IMR-90 (cell line): ENCODE measurements at regions of chr2 and their contacts with region 1.

Region 1: DNA sequence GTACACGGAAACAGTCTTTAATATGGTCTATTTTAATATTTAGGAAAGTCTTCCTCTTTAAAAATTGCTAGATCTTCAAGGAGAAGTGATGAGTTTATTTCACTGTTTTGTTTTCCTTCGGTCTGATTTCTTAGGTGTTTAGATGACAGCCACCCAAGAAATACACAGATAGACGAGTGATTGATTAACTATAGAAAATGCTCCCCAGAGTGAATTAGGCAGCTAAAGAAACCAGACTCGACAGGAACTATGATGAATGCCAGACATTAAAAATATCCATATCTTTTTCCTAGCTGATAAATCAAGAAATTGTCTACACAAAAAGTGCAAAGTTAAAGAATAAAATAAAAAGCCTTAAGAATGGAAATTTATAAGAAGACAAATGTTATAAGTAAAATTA is 888.7 kb upstream of the CNTNAP5 start:
- DNase-seq: no peak
- ATAC-seq: no peak
- H3K4me3 ChIP-seq: no peak overlapping the region
- H3K27ac ChIP-seq: no peak overlapping the region
- H3K4me1 ChIP-seq: no peaks in the 10 kb centered on the region
- H3K27me3 ChIP-seq: no peaks in the 10 kb centered on the region
- CTCF ChIP-seq: no peak
- POLR2A ChIP-seq: no peak
- RAD21 ChIP-seq: no peak

Region 2: GRCh38 chr2:122831649-122832048 is 304.8 kb before region 1 on chr2:
- CTCF ChIA-PET with region 1: no interaction called
- POLR2A ChIA-PET with region 1: no interaction called
- dilution Hi-C with region 1: no loop called
- in situ Hi-C with region 1: no loop called
- intact Hi-C with region 1: no loop called
- DNase-seq: no peak
- ATAC-seq: no peak
- H3K4me3 ChIP-seq: no peak overlapping the region
- H3K27ac ChIP-seq: no peak overlapping the region
- H3K4me1 ChIP-seq: no peaks in the 10 kb centered on the region
- H3K27me3 ChIP-seq: no peaks in the 10 kb centered on the region
- CTCF ChIP-seq: no peak
- POLR2A ChIP-seq: no peak
- RAD21 ChIP-seq: no peak

Region 3: GRCh38 chr2:122908159-122908558 is 228.3 kb before region 1 on chr2:
- CTCF ChIA-PET with region 1: no interaction called
- POLR2A ChIA-PET with region 1: no interaction called
- dilution Hi-C with region 1: no loop called
- in situ Hi-C with region 1: no loop called
- intact Hi-C with region 1: no loop called
- DNase-seq: no peak
- ATAC-seq: no peak
- H3K4me3 ChIP-seq: no peak overlapping the region
- H3K27ac ChIP-seq: no peak overlapping the region
- H3K4me1 ChIP-seq: no peaks in the 10 kb centered on the region
- H3K27me3 ChIP-seq: no peaks in the 10 kb centered on the region
- CTCF ChIP-seq: no peak
- POLR2A ChIP-seq: no peak
- RAD21 ChIP-seq: no peak

Region 4: GRCh38 chr2:123157016-123157415 is 20.6 kb after region 1 on chr2:
- CTCF ChIA-PET with region 1: no interaction called
- POLR2A ChIA-PET with region 1: no interaction called
- dilution Hi-C with region 1: no loop called
- in situ Hi-C with region 1: no loop called
- intact Hi-C with region 1: loop called (anchors 1 kb)
- DNase-seq: no peak
- ATAC-seq: no peak
- H3K4me3 ChIP-seq: no peak overlapping the region
- H3K27ac ChIP-seq: no peak overlapping the region
- H3K4me1 ChIP-seq: no peaks in the 10 kb centered on the region
- H3K27me3 ChIP-seq: no peaks in the 10 kb centered on the region
- CTCF ChIP-seq: no peak
- POLR2A ChIP-seq: no peak
- RAD21 ChIP-seq: no peak